ENCODE measurements at regions of chr3 and their contacts with region 1.

Region 1: DNA sequence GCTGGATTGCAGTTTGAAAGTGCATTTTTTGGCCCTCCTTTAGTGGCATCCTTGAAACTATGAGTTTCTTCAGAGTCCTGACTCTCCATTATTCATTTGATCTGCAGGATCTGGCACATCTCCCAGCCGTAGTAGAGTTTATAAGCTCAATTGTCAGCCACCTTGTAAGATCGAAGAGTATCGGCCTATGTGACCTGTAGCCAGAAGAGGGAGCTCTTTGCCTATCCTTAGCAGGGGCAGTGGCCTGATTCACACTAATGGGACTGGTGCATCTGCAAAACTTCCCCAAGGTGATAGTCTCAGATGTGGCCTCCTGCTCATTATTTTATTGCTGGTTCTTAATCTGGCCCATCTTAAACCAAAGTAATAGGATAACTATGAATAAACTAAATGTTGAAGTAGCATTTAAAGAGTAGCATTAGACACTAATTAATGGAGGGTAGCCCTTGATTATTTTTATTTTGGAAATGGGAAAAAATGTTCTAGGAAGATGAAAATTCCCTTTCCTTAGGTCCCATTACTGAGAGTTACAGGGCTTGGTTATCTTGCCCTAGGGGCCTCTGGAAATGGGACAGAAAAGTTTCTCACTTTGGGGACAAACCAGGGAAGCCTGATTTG is 21.2 kb downstream of the GCSAM start:
- DNase-seq: peak; percentile 30 to 84 (median 61)
- ATAC-seq: peak; percentile 94
- H3K4me3 ChIP-seq: no peak overlapping the region
- H3K4me3 Mint-ChIP-seq: no peak overlapping the region
- H3K27ac ChIP-seq: no peak overlapping the region
- H3K27ac Mint-ChIP-seq: no peak overlapping the region
- H3K4me1 ChIP-seq: no peaks in the 10 kb centered on the region
- H3K4me1 Mint-ChIP-seq: peaks cover 7% of the 10 kb centered on the region
- H3K27me3 ChIP-seq: no peaks in the 10 kb centered on the region
- H3K27me3 Mint-ChIP-seq: no peaks in the 10 kb centered on the region
- CTCF ChIP-seq: peak; percentile 82

Region 2: DNA sequence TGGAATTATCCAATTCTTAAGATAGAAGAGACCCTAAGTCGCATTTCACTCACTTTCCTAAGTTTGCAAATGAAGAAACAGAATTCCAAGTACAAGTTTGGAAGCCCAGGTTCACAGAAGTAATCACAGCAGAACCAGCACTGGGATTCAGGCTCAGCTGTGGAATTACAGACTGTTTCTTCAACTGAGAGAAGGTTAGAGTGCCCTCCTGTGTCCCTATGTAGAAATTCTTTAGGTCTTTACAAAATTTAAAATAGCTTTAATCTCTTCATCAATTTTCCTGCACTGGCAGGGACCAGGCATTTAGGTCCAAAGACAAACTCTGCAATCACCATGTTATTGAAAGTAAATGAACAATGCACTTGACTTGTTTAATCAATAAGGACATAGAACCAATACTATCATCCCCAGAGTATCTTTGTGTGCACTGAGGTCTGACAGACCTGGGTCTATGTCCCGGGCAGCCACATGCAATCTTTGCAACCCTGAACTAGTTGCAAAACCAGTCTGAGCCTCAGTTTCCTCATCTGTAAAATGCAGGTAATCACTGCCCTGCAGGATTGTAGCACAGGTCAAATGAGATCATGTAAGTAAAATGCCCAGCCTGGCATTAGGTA is 420.5 kb before region 1 on chr3:
- CTCF ChIA-PET with region 1: no interaction called
- POLR2A ChIA-PET with region 1: no interaction called
- intact Hi-C with region 1: no loop called
- DNase-seq: peak in 2 of 9 experiments; percentile 54 to 71
- ATAC-seq: peak; percentile 68
- H3K4me3 ChIP-seq: no peak overlapping the region
- H3K4me3 Mint-ChIP-seq: no peak overlapping the region
- H3K27ac ChIP-seq: no peak overlapping the region
- H3K27ac Mint-ChIP-seq: no peak overlapping the region
- H3K4me1 ChIP-seq: peaks cover 5% of the 10 kb centered on the region
- H3K4me1 Mint-ChIP-seq: peaks cover 68% of the 10 kb centered on the region
- H3K27me3 ChIP-seq: no peaks in the 10 kb centered on the region
- H3K27me3 Mint-ChIP-seq: no peaks in the 10 kb centered on the region
- CTCF ChIP-seq: peak; percentile 65

Region 3: GRCh38 chr3:112175646-112176045 is 63.8 kb after region 1 on chr3:
- CTCF ChIA-PET with region 1: no interaction called
- POLR2A ChIA-PET with region 1: no interaction called
- intact Hi-C with region 1: loop called in 1 of 2 experiments (anchors 5 kb)
- DNase-seq: no peak
- ATAC-seq: no peak
- H3K4me3 ChIP-seq: no peak overlapping the region
- H3K4me3 Mint-ChIP-seq: no peak overlapping the region
- H3K27ac ChIP-seq: no peak overlapping the region
- H3K27ac Mint-ChIP-seq: no peak overlapping the region
- H3K4me1 ChIP-seq: no peaks in the 10 kb centered on the region
- H3K4me1 Mint-ChIP-seq: no peaks in the 10 kb centered on the region
- H3K27me3 ChIP-seq: no peaks in the 10 kb centered on the region
- H3K27me3 Mint-ChIP-seq: no peaks in the 10 kb centered on the region
- CTCF ChIP-seq: no peak

Region 4: DNA sequence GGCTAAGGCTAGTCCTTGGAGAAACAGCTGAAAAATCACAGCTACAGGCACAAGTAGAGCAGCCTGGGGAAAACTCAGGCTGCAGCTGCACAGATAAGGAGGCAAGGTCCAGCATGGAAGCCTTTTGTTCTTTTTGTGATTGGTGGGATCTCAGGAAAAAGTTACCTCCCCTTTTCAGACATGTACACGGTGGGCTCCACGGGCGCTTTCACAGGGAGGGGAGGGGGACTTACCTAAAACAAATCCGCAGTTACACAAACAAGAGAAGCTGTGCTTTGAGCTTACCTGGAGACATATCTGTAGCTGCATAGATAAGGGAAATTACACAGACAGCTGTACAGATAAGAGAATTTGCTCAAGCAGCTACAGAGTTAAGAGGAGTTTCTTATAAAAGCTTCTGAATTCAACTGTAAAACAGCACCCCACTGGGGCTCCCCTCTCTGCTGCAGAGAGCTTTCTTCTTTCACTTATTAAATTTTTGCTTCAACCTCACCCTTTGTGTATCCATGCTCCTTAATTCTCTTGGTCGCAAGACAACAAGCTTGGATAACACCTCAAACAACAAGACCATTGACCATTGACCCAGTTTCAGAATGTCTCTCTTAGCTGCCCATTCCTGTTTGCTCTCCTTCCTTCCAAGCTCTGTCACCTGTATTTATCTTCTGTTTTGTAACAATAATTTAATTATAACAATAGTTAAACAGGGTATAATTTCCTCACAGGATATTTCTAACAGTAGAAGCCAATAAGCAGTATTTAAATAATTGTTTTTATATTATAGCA is 210.2 kb after region 1 on chr3:
- CTCF ChIA-PET with region 1: interaction called, 15 read pairs
- POLR2A ChIA-PET with region 1: no interaction called
- intact Hi-C with region 1: loop called (anchors 1 to 5 kb)
- DNase-seq: no peak
- ATAC-seq: no peak
- H3K4me3 ChIP-seq: no peak overlapping the region
- H3K4me3 Mint-ChIP-seq: no peak overlapping the region
- H3K27ac ChIP-seq: no peak overlapping the region
- H3K27ac Mint-ChIP-seq: no peak overlapping the region
- H3K4me1 ChIP-seq: no peaks in the 10 kb centered on the region
- H3K4me1 Mint-ChIP-seq: no peaks in the 10 kb centered on the region
- H3K27me3 ChIP-seq: no peaks in the 10 kb centered on the region
- H3K27me3 Mint-ChIP-seq: no peaks in the 10 kb centered on the region
- CTCF ChIP-seq: no peak

Region 5: DNA sequence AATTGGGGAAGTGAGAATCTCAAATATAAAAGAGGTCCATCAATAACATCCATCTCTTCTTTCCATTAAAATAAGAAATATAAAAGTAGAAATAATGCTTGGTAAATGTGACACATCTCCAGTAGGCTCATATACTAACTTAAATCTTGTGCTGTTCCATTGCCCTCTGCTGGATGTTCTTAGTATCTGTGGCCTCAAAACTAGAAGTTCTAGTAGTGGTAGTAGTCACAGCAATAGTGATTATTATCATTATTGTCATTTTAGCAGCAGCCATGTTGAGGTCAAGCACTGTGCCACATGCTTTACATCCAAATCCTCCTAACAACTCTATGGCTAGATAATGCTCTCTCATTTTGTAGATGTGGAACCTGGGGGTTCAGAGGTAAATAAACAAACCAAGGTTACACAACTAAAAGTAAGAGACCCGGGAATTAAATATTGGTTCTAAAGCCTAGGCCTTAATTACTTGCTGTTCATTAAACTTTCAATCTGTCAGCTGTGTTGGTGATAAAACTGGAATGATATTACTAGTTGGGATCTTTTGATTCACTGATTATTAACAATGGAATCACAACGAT is 407.6 kb after region 1 on chr3:
- CTCF ChIA-PET with region 1: interaction called, 16 read pairs
- POLR2A ChIA-PET with region 1: no interaction called
- intact Hi-C with region 1: loop called (anchors 1 kb)
- DNase-seq: peak in 4 of 9 experiments; percentile 27 to 79 (median 48)
- ATAC-seq: peak; percentile 92
- H3K4me3 ChIP-seq: no peak overlapping the region
- H3K4me3 Mint-ChIP-seq: no peak overlapping the region
- H3K27ac ChIP-seq: no peak overlapping the region
- H3K27ac Mint-ChIP-seq: no peak overlapping the region
- H3K4me1 ChIP-seq: peaks cover 4% of the 10 kb centered on the region
- H3K4me1 Mint-ChIP-seq: peaks cover 16% of the 10 kb centered on the region
- H3K27me3 ChIP-seq: no peaks in the 10 kb centered on the region
- H3K27me3 Mint-ChIP-seq: no peaks in the 10 kb centered on the region
- CTCF ChIP-seq: peak; percentile 80